Activated B cell treated with CpG ODN at 0.5 μM for 24 hours (primary cell): ENCODE measurements at regions of chr1 and their contacts with region 1.

Region 1: GRCh38 chr1:98794196-98794886 is 132.8 kb downstream of the SNX7 start:
- DNase-seq: no peak
- ATAC-seq: peak; percentile 77
- H3K4me3 Mint-ChIP-seq: no peak overlapping the region
- H3K27ac Mint-ChIP-seq: no peak overlapping the region
- H3K4me1 Mint-ChIP-seq: peaks cover 2% of the 10 kb centered on the region
- H3K27me3 Mint-ChIP-seq: no peaks in the 10 kb centered on the region
- CTCF ChIP-seq: no peak

Region 2: DNA sequence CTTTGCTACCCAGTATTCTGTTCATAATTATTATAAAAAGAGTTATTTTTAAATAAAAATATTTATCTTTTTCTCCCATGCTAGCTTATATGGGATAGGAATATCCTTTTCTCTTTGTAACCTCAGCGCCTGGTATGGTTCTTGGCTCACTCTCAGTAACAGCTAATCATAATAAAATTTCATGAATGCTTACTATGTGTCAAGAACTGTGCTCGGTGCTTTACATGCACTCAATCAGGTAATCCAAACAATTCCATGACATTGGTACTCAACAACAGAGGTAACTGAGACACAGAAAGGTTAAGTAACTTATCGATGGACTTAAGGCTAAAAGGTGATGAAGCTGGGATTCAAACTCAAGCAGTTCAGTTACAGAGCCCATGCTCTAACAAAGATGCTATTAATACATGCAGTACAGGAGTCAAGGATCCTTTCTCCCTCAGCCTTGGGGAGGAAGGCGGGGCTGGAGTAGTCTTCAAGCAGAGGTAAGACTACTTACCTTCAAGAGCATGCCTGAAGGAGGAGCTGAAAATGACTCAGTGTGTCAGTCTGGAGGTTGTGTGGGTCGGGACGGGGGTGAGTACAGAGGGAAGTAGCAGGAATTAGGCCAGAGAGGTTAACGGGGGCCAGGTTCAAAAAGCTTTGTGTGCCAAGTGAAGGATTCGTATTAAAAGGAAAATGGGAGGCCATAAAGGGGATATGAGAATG is 136.9 kb after region 1 on chr1:
- CTCF ChIA-PET with region 1: no interaction called
- POLR2A ChIA-PET with region 1: no interaction called
- intact Hi-C with region 1: loop called (anchors 10 kb)
- DNase-seq: no peak
- ATAC-seq: no peak
- H3K4me3 Mint-ChIP-seq: no peak overlapping the region
- H3K27ac Mint-ChIP-seq: no peak overlapping the region
- H3K4me1 Mint-ChIP-seq: no peaks in the 10 kb centered on the region
- H3K27me3 Mint-ChIP-seq: no peaks in the 10 kb centered on the region
- CTCF ChIP-seq: no peak

Region 3: DNA sequence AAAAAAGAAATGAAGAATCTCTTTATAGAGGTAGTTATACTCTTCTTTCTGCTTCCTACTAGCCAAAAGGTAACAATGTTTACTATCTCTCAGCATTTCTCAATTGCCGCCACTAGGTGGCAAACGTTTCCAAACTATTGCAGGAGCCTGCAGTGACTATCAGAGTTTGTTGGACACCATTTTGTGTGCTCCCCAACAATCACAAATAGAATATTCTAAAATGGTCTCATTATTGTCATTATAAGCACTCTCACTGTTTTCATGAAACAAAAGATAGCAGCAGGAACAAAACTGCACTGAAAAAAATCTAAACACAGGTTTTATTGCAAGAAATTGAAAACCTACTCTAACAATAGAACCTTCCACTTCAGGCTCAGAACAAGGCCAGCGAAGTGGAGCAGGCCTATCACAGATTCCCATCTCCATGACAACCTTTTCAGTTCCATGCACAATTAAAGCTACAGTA is 386.0 kb after region 1 on chr1:
- CTCF ChIA-PET with region 1: interaction called, 5 read pairs
- POLR2A ChIA-PET with region 1: no interaction called
- intact Hi-C with region 1: loop called (anchors 5 kb)
- DNase-seq: no peak
- ATAC-seq: peak; percentile 81
- H3K4me3 Mint-ChIP-seq: no peak overlapping the region
- H3K27ac Mint-ChIP-seq: no peak overlapping the region
- H3K4me1 Mint-ChIP-seq: no peaks in the 10 kb centered on the region
- H3K27me3 Mint-ChIP-seq: no peaks in the 10 kb centered on the region
- CTCF ChIP-seq: no peak

Region 4: GRCh38 chr1:99685516-99686180 is 891.3 kb after region 1 on chr1:
- CTCF ChIA-PET with region 1: no interaction called
- POLR2A ChIA-PET with region 1: no interaction called
- intact Hi-C with region 1: loop called (anchors 5 kb)
- DNase-seq: no peak
- ATAC-seq: peak; percentile 45
- H3K4me3 Mint-ChIP-seq: no peak overlapping the region
- H3K27ac Mint-ChIP-seq: no peak overlapping the region
- H3K4me1 Mint-ChIP-seq: no peaks in the 10 kb centered on the region
- H3K27me3 Mint-ChIP-seq: peaks cover 3% of the 10 kb centered on the region
- CTCF ChIP-seq: no peak